ENCODE measurements at regions of chr19 and their contacts with region 1.

Region 1: DNA sequence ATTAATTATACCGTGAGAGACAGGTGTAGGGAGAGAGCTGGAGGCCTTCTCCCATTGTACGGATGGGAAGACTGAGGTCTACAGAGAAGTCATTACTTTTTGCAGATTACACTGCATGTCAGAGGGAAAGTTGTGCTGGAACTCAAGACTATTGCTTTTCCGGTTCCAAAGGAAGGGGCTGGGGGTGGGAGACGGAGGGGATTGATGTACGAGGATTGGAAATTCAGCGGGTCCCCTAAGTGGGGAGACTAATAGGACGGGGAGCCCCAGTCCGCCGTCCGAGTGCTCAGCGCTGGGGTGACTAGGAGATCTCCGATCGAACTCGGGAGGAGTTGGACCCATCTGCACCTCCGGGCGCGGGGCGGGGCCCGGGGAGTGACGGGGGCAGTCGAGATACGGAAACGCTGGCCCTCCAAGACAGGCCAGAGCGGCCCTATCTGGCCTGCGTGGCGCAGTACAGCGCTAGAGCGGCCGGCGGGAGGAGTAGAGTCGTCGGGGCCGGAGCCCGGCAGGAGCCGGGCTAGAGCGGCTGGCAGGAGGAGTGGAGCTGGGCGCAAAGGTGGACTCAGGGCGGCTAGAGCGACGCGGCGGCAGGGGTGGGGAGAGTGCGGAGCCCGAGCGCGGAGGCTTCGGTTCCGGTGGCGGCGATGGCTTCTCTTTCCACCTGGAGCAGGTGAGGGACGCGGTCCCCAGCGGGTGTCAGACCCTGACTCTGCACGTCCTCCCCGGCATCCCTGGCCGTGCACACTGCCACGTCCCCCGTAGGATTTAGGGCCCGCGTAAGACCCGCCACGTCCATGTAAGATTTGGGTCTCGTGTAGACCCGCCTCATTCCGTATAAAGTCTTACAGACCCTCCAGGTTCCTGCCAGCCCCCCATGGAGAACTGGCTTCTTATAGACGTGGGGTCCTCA is 1.1 kb downstream of the ARHGEF1 start:
- DNase-seq: peak; percentile 82 to 86 (median 83)
- H3K4me3 ChIP-seq: peak overlapping the region; percentile 45 to 94
- H3K4me3 Mint-ChIP-seq: peak overlapping the region; percentile 86 to 99 (median 96)
- H3K27ac ChIP-seq: peak overlapping the region; percentile 82
- H3K27ac Mint-ChIP-seq: peak overlapping the region; percentile 90 to 99 (median 96)
- H3K4me1 ChIP-seq: peaks cover 71% of the 10 kb centered on the region
- H3K4me1 Mint-ChIP-seq: peaks cover 36 to 90% (median 57%) of the 10 kb centered on the region in 4 donors
- H3K27me3 ChIP-seq: no peaks in the 10 kb centered on the region
- H3K27me3 Mint-ChIP-seq: no peaks in the 10 kb centered on the region

Region 2: DNA sequence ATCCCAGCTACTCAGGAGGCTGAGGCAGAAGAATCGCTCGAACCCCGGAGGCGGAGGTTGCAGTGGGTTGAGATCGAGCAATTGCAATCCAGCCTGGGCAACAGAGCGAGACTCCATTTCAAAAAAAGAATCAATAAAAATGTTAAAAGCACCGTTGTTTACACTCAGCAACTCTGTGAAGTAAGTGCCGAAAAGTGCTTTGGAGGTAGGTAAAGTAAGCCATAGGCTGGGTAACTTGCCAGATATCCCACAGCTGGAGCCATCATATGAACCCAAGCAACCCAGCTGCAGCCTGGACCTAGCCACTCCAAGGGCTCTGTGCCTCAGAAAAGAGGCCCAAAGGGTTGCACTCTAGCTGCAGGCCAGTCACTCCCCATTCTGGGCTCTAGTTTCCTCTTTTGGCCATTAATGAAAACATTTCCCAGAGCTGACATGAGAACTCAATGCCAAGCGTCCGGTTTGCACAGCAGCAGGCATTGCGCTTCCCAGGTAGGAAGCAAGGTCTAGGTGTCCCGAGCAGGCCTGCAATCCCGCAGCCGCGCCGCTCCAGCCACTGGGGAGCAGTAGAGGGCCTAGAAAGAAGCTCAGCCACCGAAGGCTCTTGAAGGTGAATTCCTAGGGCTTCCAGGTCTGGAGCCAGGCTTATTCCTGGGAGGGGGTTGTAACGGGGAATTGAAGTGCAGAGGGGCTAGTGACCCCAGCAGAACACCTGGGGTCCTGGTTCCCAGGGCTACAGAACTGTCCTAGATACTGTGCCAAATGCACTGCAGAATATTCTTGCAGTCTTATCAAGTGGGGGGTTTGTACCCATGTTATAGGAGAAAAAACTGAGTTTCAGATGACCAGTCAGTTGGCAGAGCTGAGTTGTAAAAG is 11.1 kb before region 1 on chr19:
- CTCF ChIA-PET with region 1: interaction called, 142 read pairs
- POLR2A ChIA-PET with region 1: interaction called, 579 read pairs
- intact Hi-C with region 1: loop called (anchors 1 kb)
- DNase-seq: peak; percentile 59 to 70 (median 63)
- H3K4me3 ChIP-seq: no peak overlapping the region
- H3K4me3 Mint-ChIP-seq: peak overlapping the region; percentile 26 to 85 (median 68)
- H3K27ac ChIP-seq: peak overlapping the region; percentile 66
- H3K27ac Mint-ChIP-seq: peak overlapping the region; percentile 92 to 99 (median 95)
- H3K4me1 ChIP-seq: peaks cover 98% of the 10 kb centered on the region
- H3K4me1 Mint-ChIP-seq: peaks cover 45 to 97% (median 68%) of the 10 kb centered on the region in 4 donors
- H3K27me3 ChIP-seq: no peaks in the 10 kb centered on the region
- H3K27me3 Mint-ChIP-seq: no peaks in the 10 kb centered on the region

Region 3: GRCh38 chr19:41912899-41913537 is 28.9 kb after region 1 on chr19:
- CTCF ChIA-PET with region 1: no interaction called
- POLR2A ChIA-PET with region 1: interaction called, 349 read pairs
- intact Hi-C with region 1: loop called (anchors 1 kb)
- DNase-seq: peak in 2 of 5 donors; percentile 39 to 43
- H3K4me3 ChIP-seq: no peak overlapping the region
- H3K4me3 Mint-ChIP-seq: peak overlapping the region in 4 of 8 donors; percentile 9 to 57 (median 32)
- H3K27ac ChIP-seq: no peak overlapping the region
- H3K27ac Mint-ChIP-seq: peak overlapping the region in 3 of 7 donors; percentile 43 to 75 (median 67)
- H3K4me1 ChIP-seq: peaks cover 45% of the 10 kb centered on the region
- H3K4me1 Mint-ChIP-seq: peaks cover 25 to 51% (median 26%) of the 10 kb centered on the region in 4 donors
- H3K27me3 ChIP-seq: peaks cover 23% of the 10 kb centered on the region
- H3K27me3 Mint-ChIP-seq: peaks cover 7 to 14% of the 10 kb centered on the region in 2 donors

Region 4: DNA sequence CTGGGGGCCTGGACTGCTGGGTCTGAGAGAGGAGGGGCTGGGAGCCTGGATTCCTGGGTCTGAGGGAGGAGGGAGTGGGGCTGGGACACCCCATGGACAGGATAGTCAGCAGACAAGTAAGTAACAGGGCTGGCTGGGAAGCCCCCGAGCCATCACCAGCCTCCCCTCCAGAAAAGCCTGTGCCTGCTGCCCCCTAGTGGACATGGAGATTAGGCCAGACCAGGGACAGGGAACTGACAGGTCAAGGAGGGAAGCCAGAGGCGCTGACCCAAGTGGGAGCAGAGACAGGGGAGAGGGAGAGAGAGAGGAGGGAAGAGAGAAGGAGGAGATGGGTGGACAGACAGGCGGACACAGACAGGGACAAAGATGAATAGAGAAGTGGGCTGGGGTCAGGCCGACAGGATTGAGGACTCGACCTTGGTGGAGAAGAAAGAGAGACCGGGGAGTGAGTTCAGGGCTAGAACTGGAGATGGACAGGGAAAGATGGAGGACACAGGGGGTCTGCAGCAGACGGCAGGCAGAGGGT is 50.8 kb after region 1 on chr19:
- CTCF ChIA-PET with region 1: interaction called, 7 read pairs
- POLR2A ChIA-PET with region 1: interaction called, 156 read pairs
- intact Hi-C with region 1: loop called (anchors 1 kb)
- DNase-seq: peak; percentile 65 to 82 (median 70)
- H3K4me3 ChIP-seq: no peak overlapping the region
- H3K4me3 Mint-ChIP-seq: peak overlapping the region in 2 of 8 donors; percentile 51 to 64
- H3K27ac ChIP-seq: no peak overlapping the region
- H3K27ac Mint-ChIP-seq: peak overlapping the region; percentile 38 to 95 (median 89)
- H3K4me1 ChIP-seq: peaks cover 37% of the 10 kb centered on the region
- H3K4me1 Mint-ChIP-seq: peaks cover 25 to 61% (median 40%) of the 10 kb centered on the region in 4 donors
- H3K27me3 ChIP-seq: no peaks in the 10 kb centered on the region
- H3K27me3 Mint-ChIP-seq: peaks cover 1 to 6% of the 10 kb centered on the region in 2 donors

Region 5: GRCh38 chr19:41945135-41945766 is 61.2 kb after region 1 on chr19:
- CTCF ChIA-PET with region 1: interaction called, 15 read pairs
- POLR2A ChIA-PET with region 1: interaction called, 106 read pairs
- intact Hi-C with region 1: no loop called
- DNase-seq: peak; percentile 88 to 99 (median 90)
- H3K4me3 ChIP-seq: no peak overlapping the region
- H3K4me3 Mint-ChIP-seq: peak overlapping the region; percentile 59 to 86 (median 68)
- H3K27ac ChIP-seq: peak overlapping the region; percentile 41
- H3K27ac Mint-ChIP-seq: peak overlapping the region; percentile 95 to 100 (median 99)
- H3K4me1 ChIP-seq: peaks cover 38% of the 10 kb centered on the region
- H3K4me1 Mint-ChIP-seq: peaks cover 23 to 63% (median 38%) of the 10 kb centered on the region in 4 donors
- H3K27me3 ChIP-seq: no peaks in the 10 kb centered on the region
- H3K27me3 Mint-ChIP-seq: peaks cover 0 to 2% of the 10 kb centered on the region in 2 donors

Region 6: GRCh38 chr19:41959056-41960053 is 75.3 kb after region 1 on chr19 and contains the start of gene RABAC1:
- CTCF ChIA-PET with region 1: no interaction called
- POLR2A ChIA-PET with region 1: interaction called, 49 read pairs
- intact Hi-C with region 1: loop called (anchors 2 kb)
- DNase-seq: peak; percentile 83 to 93 (median 85)
- H3K4me3 ChIP-seq: peak within 1 kb of the TSS; percentile 73 to 85
- H3K4me3 Mint-ChIP-seq: peak within 1 kb of the TSS; percentile 90 to 97 (median 96)
- H3K27ac ChIP-seq: peak within 1 kb of the TSS; percentile 77
- H3K27ac Mint-ChIP-seq: peak within 1 kb of the TSS; percentile 82 to 99 (median 96)
- H3K4me1 ChIP-seq: peaks cover 16% of the 10 kb centered on the region
- H3K4me1 Mint-ChIP-seq: peaks cover 10 to 26% (median 17%) of the 10 kb centered on the region in 4 donors
- H3K27me3 ChIP-seq: no peaks in the 10 kb centered on the region
- H3K27me3 Mint-ChIP-seq: no peaks in the 10 kb centered on the region
- total RNA-seq, gene RABAC1: 97.4 to 100 TPM

Measured in CD4-positive, alpha-beta memory T cell (primary cell).